BJ (cell line): ENCODE measurements at regions of chr21 and their contacts with region 1.

Region 1: DNA sequence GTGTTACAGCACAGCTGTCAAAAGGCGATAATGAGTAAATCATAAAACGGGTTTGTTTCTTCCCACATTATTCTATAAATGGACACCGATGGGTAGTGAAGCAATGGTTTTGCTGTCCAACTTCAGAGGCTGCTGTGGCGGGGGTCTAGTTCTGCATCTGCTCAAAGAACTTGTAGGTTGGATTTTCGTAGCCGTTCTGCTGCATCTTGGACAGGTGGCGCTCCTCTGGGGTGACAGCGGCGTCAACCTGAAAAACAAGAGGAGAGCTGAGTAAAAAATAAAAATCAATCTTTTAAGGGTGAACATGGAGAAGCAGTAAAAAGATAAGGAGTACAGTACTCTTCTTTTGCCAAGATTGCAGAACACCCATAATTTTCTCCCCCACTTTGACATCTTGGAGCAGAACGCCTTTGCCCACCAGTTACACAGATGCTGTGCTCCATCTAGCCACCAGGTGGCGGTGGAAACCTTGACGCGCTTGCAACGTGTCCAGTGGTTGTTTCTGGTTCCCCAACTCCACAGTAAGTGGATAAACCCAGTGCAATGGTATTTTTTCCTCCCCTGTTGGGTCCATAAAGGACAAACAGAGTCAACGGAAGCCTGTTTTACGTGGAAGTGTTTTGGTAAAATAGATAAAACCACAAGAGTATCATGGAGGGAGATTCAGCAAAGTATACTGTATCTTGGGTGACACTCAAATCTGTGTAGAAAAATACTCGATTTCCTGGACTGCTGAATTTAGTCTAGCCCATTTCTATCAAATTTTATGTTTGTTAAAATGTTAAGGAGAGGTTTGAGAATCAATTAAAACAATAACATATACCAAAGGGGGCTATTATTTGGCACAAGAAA is 147.0 kb downstream of the GABPA start:
- DNase-seq: no peak
- H3K4me3 ChIP-seq: no peak overlapping the region
- H3K27me3 ChIP-seq: no peaks in the 10 kb centered on the region
- CTCF ChIP-seq: peak; percentile 98

Region 2: GRCh38 chr21:25895565-25896205 is 13.9 kb after region 1 on chr21:
- CTCF ChIA-PET with region 1: interaction called, 10 read pairs
- POLR2A ChIA-PET with region 1: no interaction called
- DNase-seq: no peak
- H3K4me3 ChIP-seq: no peak overlapping the region
- H3K27me3 ChIP-seq: no peaks in the 10 kb centered on the region
- CTCF ChIP-seq: peak; percentile 55

Region 3: GRCh38 chr21:26717146-26717739 is 835.5 kb after region 1 on chr21:
- CTCF ChIA-PET with region 1: interaction called, 22 read pairs
- POLR2A ChIA-PET with region 1: no interaction called
- DNase-seq: no peak
- H3K4me3 ChIP-seq: no peak overlapping the region
- H3K27me3 ChIP-seq: no peaks in the 10 kb centered on the region
- CTCF ChIP-seq: peak; percentile 54